SK-N-SH (cell line): ENCODE measurements at regions of chr3 and their contacts with region 1.

Region 1: DNA sequence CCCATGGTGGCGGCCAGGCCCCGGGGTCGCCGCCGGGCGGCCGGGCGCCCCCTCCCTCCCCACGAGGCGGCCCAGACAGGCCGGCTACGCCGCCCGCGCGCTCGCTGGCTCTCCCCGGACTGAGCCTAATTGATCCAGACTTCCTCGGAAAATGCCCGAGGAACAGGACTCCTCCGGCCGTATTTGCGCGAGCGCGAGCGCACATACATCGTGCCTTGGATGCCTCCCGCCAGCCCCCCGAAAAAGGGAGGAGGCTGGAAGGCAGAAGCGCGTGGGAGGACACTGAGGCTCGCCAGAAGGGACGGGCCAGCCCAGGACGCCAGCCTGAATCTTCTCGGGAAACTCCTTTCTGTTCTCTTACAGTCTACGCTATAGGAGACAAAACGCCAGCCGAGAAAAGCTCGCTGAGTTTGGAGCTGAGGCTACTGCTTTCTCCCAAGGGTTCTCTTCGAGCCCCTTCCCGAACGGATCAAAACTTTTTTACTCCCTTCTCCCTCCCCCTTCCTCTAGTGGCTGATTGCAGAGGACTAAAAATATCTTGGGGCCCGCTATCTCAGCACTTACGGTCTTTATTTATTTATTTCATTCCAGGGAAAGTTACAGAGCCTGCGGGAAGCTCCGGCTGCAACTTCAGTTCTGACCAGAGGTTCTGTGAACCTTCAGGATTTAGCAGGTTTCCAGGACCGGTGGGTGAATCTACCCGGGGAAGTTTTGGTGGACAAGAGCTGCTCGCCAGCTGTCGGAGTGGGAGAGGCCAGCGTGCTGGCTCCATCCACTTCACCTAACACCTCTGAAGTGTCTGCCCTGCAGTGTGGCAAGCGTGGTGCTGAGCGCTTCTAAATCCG is at the start of gene PDZRN3:
- DNase-seq: peak; percentile 54
- H3K4me3 ChIP-seq: peak within 1 kb of the TSS; percentile 76 to 87
- H3K27ac ChIP-seq: peak within 1 kb of the TSS; percentile 74 to 86
- H3K4me1 ChIP-seq: peaks cover 0 to 37% of the 10 kb centered on the region in 2 experiments; a peak in 2 of 4 replicates
- H3K27me3 ChIP-seq: no peaks in the 10 kb centered on the region
- CTCF ChIP-seq: 0 out of 2 replicates have a peak, but pooled peaks have one; percentile 8
- EP300 ChIP-seq: peak in 1 of 2 experiments; percentile 32; a peak in 1 of 4 replicates
- RAD21 ChIP-seq: peak; percentile 13; the same call in 1 of the 2 replicates
- polyA plus RNA-seq, gene PDZRN3: 7.9 and 10.3 TPM in 2 replicates

Region 2: DNA sequence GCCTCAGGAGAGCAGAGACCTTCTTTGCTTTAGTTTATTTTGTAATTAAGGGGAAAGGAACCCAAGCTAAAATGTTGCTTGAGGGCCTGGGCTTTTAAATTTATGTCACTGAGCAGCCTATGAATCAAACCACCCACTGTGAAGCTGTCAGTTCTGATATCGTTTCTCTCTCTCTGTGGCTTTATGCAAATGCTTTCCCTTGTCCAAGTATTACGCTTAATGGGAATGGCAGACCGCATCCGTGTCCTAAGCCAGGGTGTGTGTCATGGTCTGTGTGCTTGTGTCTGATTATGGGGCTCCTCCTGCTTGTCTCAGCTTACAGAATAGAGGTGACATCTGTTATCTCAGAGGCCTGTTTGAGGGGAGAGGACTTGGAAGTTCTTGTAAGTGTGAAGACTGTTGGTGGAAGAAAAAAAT is 481.2 kb before region 1 on chr3:
- CTCF ChIA-PET with region 1: no interaction called
- POLR2A ChIA-PET with region 1: no interaction called
- DNase-seq: no peak
- H3K4me3 ChIP-seq: no peak overlapping the region
- H3K27ac ChIP-seq: no peak overlapping the region
- H3K4me1 ChIP-seq: peaks cover 0 to 17% of the 10 kb centered on the region in 2 experiments; a peak in 2 of 4 replicates
- H3K27me3 ChIP-seq: no peaks in the 10 kb centered on the region; the same call in 1 of the 2 replicates
- CTCF ChIP-seq: no peak
- EP300 ChIP-seq: no peak
- RAD21 ChIP-seq: no peak

Region 3: GRCh38 chr3:73192035-73192738 is 432.9 kb before region 1 on chr3:
- CTCF ChIA-PET with region 1: no interaction called
- POLR2A ChIA-PET with region 1: no interaction called
- DNase-seq: peak; percentile 61
- H3K4me3 ChIP-seq: no peak overlapping the region; a peak in 2 of 4 replicates
- H3K27ac ChIP-seq: peak overlapping the region in 1 of 2 experiments; percentile 91; a peak in 2 of 4 replicates
- H3K4me1 ChIP-seq: peaks cover 0 to 8% of the 10 kb centered on the region in 2 experiments; a peak in 2 of 4 replicates
- H3K27me3 ChIP-seq: no peaks in the 10 kb centered on the region
- CTCF ChIP-seq: peak; percentile 38; the same call in 1 of the 2 replicates
- EP300 ChIP-seq: peak in 1 of 2 experiments; percentile 96; a peak in 2 of 4 replicates
- RAD21 ChIP-seq: peak; percentile 64

Region 4: DNA sequence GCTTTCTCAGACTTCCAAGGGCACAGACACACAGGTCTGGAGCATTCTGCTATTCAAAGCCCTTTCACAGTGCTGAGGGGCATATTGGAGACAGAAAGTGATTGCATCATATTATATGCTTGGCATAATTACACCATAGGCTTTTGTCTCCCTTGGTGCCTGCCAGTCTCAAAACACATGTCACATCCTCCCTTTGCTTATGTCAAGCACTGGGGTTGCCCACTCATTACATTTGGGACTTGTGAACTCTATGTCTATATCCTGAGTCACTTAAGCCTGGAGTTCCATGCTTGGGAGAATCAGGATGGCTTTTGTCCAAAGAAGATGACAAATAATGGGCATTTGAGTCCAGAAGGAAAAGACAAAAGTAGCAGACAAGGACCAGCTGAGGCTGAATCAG is 12.0 kb after region 1 on chr3:
- CTCF ChIA-PET with region 1: interaction called, 10 read pairs
- POLR2A ChIA-PET with region 1: no interaction called
- DNase-seq: no peak
- H3K4me3 ChIP-seq: no peak overlapping the region
- H3K27ac ChIP-seq: peak overlapping the region in 1 of 2 experiments; percentile 55; a peak in 2 of 4 replicates
- H3K4me1 ChIP-seq: peaks cover 2 to 11% of the 10 kb centered on the region in 2 experiments; a peak in 3 of 4 replicates
- H3K27me3 ChIP-seq: no peaks in the 10 kb centered on the region
- CTCF ChIP-seq: no peak
- EP300 ChIP-seq: no peak; a peak in 1 of 4 replicates
- RAD21 ChIP-seq: no peak

Region 5: DNA sequence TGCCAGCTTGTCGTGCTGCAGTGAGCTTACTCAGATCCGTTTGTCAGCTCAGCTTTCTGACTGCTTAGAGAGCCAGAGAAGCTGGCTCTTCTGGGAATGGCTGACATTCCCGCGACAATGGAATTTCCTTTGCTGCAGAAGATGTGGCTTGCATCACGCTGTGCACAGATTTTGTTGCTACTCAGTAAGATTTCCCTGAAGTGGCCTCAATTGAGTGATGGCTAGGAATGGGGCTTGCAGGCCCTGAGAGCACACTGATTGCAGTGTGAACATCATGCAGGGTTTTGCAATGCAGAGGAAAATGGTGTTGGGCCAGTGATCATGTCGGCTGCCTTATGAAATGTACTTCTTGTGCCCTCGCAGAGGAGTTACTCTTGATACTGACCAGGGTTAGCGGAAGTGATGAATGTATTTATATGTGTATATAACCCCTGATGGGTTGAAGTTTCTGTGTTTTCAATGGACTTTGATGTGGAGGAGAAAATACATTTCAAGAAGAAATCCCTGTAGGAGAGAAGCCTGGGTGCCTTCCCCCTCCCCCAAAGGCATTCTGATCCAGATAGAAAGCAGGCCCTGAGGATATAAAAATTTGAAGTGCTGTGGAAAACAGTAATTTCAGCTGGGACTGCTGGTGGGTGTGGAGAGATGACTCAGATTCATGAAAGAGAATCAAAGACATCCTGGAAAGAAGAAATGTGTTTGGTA is 102.2 kb after region 1 on chr3:
- CTCF ChIA-PET with region 1: no interaction called
- POLR2A ChIA-PET with region 1: no interaction called
- DNase-seq: no peak
- H3K4me3 ChIP-seq: peak overlapping the region in 1 of 2 experiments; percentile 28; a peak in 1 of 4 replicates
- H3K27ac ChIP-seq: peak overlapping the region; percentile 65 to 82
- H3K4me1 ChIP-seq: peaks cover 11 to 14% of the 10 kb centered on the region in 2 experiments
- H3K27me3 ChIP-seq: no peaks in the 10 kb centered on the region
- CTCF ChIP-seq: no peak
- EP300 ChIP-seq: peak in 1 of 2 experiments; percentile 20; a peak in 1 of 4 replicates
- RAD21 ChIP-seq: no peak